ENCODE measurements at regions of chr19 and their contacts with region 1.

Region 1: GRCh38 chr19:54995561-54995960 is 29.4 kb downstream of the NLRP2 start:
- DNase-seq: no peak
- ATAC-seq: no peak
- H3K4me3 ChIP-seq: no peak overlapping the region
- H3K4me3 Mint-ChIP-seq: no peak overlapping the region
- H3K27ac ChIP-seq: no peak overlapping the region
- H3K27ac Mint-ChIP-seq: no peak overlapping the region
- H3K4me1 ChIP-seq: no peaks in the 10 kb centered on the region
- H3K4me1 Mint-ChIP-seq: no peaks in the 10 kb centered on the region
- H3K27me3 ChIP-seq: peaks cover 0 to 5% (median 0%) of the 10 kb centered on the region in 4 experiments
- H3K27me3 Mint-ChIP-seq: peaks cover 5% of the 10 kb centered on the region
- CTCF ChIP-seq: no peak

Region 2: DNA sequence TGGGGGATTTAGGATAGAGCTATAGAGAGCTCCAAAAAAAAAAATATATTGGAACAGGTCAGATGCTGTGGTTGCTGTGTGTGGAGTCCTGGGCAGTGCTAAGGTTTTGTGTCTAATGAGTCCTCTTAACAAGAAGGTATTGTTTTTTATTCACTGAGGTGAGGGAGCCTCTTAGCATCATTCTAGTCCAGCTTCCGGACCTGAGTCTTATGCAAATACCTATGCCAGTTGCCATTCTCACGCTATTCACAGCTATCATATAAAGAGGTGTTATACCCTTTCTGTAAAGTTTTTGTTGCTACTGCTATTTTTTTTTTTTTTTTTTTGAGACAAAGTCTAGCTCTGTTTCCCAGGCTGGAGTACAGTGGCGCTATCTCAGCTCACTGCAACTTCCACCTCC is 27.9 kb before region 1 on chr19:
- CTCF ChIA-PET with region 1: interaction called, 3 read pairs
- POLR2A ChIA-PET with region 1: interaction called, 10 read pairs
- intact Hi-C with region 1: no loop called
- DNase-seq: no peak
- ATAC-seq: no peak
- H3K4me3 ChIP-seq: no peak overlapping the region
- H3K4me3 Mint-ChIP-seq: peak overlapping the region; percentile 17
- H3K27ac ChIP-seq: no peak overlapping the region
- H3K27ac Mint-ChIP-seq: no peak overlapping the region
- H3K4me1 ChIP-seq: no peaks in the 10 kb centered on the region
- H3K4me1 Mint-ChIP-seq: peaks cover 3% of the 10 kb centered on the region
- H3K27me3 ChIP-seq: no peaks in the 10 kb centered on the region
- H3K27me3 Mint-ChIP-seq: no peaks in the 10 kb centered on the region
- CTCF ChIP-seq: no peak

Measured in B cell (primary cell).